Activated CD4-positive, alpha-beta T cell treated with anti-CD3 and anti-CD28 coated beads, Interleukin-2, amount 10 ng/mL, durations not matched to agents 24 days and 14 days (primary cell): ENCODE measurements at regions of chr6 and their contacts with region 1.

Region 1: GRCh38 chr6:161370880-161371279 is 97.0 kb upstream of the AGPAT4 start:
- DNase-seq: peak; percentile 90
- H3K4me3 Mint-ChIP-seq: no peak overlapping the region
- H3K27ac Mint-ChIP-seq: no peak overlapping the region
- H3K4me1 Mint-ChIP-seq: no peaks in the 10 kb centered on the region
- H3K27me3 Mint-ChIP-seq: no peaks in the 10 kb centered on the region

Region 2: DNA sequence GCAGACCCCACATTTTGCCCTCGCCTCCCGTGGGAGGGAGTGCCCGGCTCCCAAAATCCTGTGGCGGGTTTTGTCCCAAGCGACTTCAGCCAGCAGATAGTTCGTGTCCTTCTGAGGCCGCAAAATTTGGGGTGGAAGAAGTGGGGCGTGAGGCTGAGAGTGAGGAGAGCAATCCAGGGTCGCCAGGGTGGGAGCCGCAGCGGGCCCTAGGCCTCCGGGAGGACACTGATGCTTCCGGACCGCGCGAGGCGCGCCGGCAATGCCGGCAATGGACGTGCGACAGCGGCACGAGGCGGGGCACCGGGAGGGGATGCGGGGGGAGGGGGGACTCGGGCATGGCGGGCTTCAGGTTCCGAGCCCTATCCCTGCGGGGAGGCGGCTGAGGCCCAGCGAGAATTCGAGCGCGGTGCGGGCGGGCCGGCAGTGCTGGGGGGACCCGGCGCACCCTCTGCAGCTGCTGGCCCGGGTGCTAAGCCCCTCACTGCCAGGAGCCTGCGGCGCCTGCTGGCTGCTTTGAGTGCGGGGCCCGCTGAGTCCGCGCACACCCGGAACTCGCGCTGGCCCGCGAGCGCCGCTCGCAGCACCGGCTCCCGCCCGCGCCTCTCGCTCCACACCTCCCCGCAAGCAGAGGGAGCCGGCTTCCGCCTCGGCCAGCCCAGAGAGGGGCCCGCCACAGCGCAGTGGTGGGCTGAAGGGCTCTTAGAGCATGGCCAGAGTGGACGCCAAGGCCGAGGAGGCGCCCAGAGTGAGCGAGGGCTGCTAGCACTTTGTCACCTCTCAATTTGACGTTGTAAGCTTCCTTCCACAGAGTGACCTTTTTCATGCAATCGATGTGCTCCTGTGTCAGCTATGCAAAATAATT is 850.6 kb before region 1 on chr6:
- intact Hi-C with region 1: loop called (anchors 5 kb)
- DNase-seq: peak; percentile 93
- H3K4me3 Mint-ChIP-seq: peak overlapping the region; percentile 89
- H3K27ac Mint-ChIP-seq: peak overlapping the region; percentile 88
- H3K4me1 Mint-ChIP-seq: peaks cover 28% of the 10 kb centered on the region
- H3K27me3 Mint-ChIP-seq: peaks cover 51% of the 10 kb centered on the region

Region 3: DNA sequence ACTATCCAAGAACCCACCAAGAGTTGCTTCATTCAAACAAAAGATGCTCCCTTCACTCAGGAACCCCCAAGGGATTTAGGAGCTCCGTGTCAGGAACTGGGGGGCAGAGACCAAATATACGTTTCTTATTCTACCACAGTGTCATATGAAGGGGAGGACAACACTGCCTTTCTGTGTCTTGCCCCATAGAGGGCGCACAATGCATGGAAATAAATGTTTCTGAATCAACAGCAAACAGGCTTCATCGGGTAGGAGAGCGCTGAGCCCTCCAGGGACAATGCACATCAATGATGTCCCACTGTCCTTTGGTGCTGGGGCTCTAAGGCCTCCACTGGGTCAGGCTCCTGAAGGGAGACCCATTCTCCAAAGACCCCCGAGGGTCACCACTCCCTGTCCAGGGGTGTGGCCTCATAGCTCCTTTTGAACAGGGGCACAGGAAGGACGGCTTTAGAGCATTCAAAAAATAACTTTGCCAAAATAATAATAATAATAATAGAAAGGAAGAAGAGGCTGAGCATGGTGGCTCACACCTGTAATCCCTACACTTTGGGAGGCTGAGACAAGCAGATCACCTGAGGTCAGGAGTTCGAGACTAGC is 637.7 kb before region 1 on chr6:
- intact Hi-C with region 1: loop called (anchors 1 kb)
- DNase-seq: peak; percentile 75
- H3K4me3 Mint-ChIP-seq: no peak overlapping the region
- H3K27ac Mint-ChIP-seq: no peak overlapping the region
- H3K4me1 Mint-ChIP-seq: no peaks in the 10 kb centered on the region
- H3K27me3 Mint-ChIP-seq: peaks cover 4% of the 10 kb centered on the region

Region 4: GRCh38 chr6:160930547-160931377 is 440.1 kb before region 1 on chr6:
- intact Hi-C with region 1: loop called (anchors 1 kb)
- DNase-seq: peak; percentile 87
- H3K4me3 Mint-ChIP-seq: peak overlapping the region; percentile 43
- H3K27ac Mint-ChIP-seq: no peak overlapping the region
- H3K4me1 Mint-ChIP-seq: no peaks in the 10 kb centered on the region
- H3K27me3 Mint-ChIP-seq: peaks cover 28% of the 10 kb centered on the region

Region 5: DNA sequence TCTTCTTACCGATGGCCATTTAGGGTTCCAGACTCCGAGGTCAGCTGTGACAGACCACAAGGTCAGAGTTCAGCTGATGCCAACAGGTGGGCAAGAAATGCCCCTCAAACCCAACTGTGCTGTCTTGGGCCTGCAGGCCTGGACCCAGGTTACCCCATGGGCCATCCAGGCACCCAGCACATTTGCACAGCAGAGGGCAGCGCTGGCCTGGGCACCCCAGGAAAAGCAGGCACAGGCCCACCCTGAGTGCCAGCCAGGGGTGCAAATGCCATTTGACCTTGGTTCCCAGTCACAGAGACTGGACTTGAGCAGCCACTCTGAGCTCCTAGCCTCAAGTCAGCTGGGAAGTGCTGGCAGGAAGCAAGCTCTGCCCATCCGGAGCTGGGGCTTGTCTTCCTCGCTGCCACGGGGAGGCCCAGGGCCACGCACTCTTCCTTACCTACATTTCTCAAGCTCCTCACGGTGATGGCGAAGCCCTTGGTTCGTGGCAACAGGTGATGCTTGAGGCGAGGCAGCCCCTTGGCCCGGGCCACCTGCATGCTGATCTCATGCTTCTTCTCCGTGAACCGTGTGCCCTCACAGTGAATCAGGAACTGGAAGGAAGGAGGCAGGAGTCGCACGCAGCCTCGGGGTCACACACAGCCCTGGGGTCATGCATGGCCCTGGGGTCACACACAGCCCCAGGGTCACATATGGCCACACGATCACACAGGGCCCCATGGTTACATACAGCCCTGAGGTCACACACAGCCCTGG is 217.8 kb before region 1 on chr6:
- intact Hi-C with region 1: loop called (anchors 2 kb)
- DNase-seq: peak; percentile 69
- H3K4me3 Mint-ChIP-seq: no peak overlapping the region
- H3K27ac Mint-ChIP-seq: no peak overlapping the region
- H3K4me1 Mint-ChIP-seq: no peaks in the 10 kb centered on the region
- H3K27me3 Mint-ChIP-seq: no peaks in the 10 kb centered on the region

Region 6: DNA sequence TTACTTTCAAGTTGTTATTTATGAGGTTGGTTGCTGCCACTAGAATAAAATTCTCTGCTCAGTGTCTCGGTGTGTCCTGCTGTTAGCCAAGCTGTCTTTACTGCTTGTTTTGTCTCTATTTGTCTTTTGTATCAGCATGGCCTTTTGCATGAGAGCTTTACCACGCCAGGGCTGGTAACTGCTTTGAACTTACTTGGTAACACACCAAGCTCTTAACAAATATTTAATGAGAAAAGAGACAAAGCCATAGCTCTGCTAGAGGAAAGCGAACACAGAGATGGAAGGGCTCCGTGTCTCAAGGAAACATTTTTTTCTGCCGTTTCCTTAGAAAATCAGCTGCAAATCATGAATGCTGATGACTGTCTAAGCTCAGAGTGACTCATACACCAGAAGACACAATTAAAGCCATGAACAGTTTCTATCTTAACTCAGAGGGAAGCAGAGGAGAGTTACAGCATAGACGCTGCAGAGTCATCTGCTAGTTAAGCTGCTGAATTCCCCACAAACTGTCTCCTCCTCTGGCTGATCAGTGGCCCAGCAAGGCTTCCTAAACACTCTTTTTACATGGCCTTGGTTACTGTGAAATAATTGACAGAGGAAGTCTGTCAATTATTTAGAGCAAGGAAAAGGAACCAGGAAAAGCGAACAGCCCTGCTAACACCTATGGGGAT is 141.8 kb before region 1 on chr6:
- intact Hi-C with region 1: loop called (anchors 5 kb)
- DNase-seq: peak; percentile 68
- H3K4me3 Mint-ChIP-seq: peak overlapping the region; percentile 67
- H3K27ac Mint-ChIP-seq: peak overlapping the region; percentile 71
- H3K4me1 Mint-ChIP-seq: peaks cover 48% of the 10 kb centered on the region
- H3K27me3 Mint-ChIP-seq: no peaks in the 10 kb centered on the region

Region 7: GRCh38 chr6:161301338-161301737 is 69.5 kb before region 1 on chr6:
- intact Hi-C with region 1: no loop called
- DNase-seq: no peak
- H3K4me3 Mint-ChIP-seq: no peak overlapping the region
- H3K27ac Mint-ChIP-seq: no peak overlapping the region
- H3K4me1 Mint-ChIP-seq: no peaks in the 10 kb centered on the region
- H3K27me3 Mint-ChIP-seq: peaks cover 9% of the 10 kb centered on the region